ENCODE measurements at regions of chr6 and their contacts with region 1.

Region 1: DNA sequence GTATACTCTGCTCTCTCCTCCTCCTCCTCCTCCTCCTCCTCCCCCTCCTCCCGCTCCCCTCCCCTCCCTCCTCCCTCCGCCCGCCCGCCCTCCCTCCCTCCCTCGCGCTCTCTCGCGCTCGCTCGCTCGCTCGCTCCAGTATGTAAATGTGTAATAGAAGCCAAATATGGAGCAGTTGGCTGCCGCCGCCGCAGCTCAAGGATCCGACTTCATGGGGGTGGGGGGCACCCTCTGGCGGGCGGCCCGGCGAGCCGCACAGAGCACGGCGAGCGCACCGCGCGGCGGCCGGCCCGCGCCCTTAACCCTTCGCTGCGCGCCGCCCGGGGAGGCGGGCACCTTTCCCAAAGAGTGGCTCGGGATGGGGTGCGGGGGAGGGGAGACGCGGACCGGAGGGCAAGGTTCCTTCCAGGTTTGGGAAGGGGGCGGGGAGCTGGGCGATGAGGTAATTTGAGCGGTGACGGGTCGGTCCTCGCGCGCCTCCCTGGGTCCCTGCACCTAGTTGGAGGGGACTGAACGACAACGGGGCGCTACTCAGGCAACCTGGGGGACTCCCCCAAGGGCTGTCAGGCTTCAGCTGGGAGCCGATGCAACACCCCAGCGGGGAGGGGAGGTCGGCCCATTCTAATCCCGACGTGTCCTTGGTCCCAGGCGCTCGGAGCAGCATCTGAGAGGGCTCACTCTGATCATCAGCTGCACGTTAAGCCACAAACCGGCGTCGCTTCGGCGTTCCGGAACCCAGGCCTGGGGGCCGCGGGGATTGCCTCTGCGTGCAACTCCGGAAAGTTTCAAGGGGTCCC is 409 bp upstream of the ATXN1 start:
- DNase-seq: peak; percentile 82 to 91
- ATAC-seq: peak; percentile 47 to 68 (median 59)
- H3K4me3 ChIP-seq: peak overlapping the region; percentile 54
- H3K4me3 Mint-ChIP-seq: peak overlapping the region; percentile 98
- H3K27ac ChIP-seq: peak overlapping the region; percentile 98
- H3K27ac Mint-ChIP-seq: peak overlapping the region; percentile 95 to 98
- H3K4me1 ChIP-seq: peaks cover 15% of the 10 kb centered on the region
- H3K4me1 Mint-ChIP-seq: peaks cover 52 to 65% of the 10 kb centered on the region in 2 donors
- H3K27me3 ChIP-seq: no peaks in the 10 kb centered on the region
- H3K27me3 Mint-ChIP-seq: no peaks in the 10 kb centered on the region
- CTCF ChIP-seq: no peak

Region 2: GRCh38 chr6:16257999-16258708 is 503.5 kb before region 1 on chr6:
- intact Hi-C with region 1: loop called (anchors 10 kb)
- DNase-seq: no peak
- ATAC-seq: no peak
- H3K4me3 ChIP-seq: no peak overlapping the region
- H3K4me3 Mint-ChIP-seq: no peak overlapping the region
- H3K27ac ChIP-seq: no peak overlapping the region
- H3K27ac Mint-ChIP-seq: no peak overlapping the region
- H3K4me1 ChIP-seq: peaks cover 12% of the 10 kb centered on the region
- H3K4me1 Mint-ChIP-seq: peaks cover 6 to 7% of the 10 kb centered on the region in 2 donors
- H3K27me3 ChIP-seq: no peaks in the 10 kb centered on the region
- H3K27me3 Mint-ChIP-seq: peaks cover 4 to 11% of the 10 kb centered on the region in 2 donors
- CTCF ChIP-seq: no peak

Region 3: DNA sequence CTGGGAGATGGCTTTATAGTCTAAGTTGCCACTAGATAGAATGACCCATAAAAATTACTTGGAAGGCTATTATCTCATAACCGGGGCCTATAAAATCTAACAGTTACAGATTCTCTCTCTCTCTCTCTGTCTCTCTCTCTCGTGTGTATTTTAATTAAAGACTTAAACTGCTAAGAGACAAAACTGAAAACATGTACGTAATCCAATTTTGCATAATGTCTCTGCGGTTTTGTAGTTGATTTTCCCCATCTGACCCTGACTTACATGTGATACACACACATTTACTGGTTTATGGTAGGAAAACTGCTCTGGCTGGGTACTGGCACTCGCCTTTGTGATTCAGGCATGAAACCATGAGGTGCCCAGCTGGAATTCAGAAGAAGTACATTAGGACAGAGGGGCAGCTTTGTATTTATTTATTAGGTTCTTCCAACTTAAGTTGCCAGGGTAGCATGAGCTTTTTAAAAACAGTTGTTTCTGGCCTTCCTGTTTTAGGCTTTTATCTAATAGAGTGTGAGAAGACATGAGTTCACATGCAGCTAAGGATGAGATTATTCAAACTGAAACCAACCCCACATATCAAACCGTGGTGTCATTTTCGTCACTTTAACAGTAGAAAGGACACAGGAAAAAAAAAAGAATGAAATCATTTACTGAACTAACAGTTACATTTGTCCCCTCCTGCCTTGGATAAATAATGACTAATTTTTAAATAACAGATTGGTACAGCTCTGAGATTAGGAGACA is 340.8 kb before region 1 on chr6:
- intact Hi-C with region 1: loop called (anchors 5 kb)
- DNase-seq: peak in 1 of 2 donors; percentile 84
- ATAC-seq: peak; percentile 87 to 88 (median 88)
- H3K4me3 ChIP-seq: no peak overlapping the region
- H3K4me3 Mint-ChIP-seq: peak overlapping the region; percentile 77
- H3K27ac ChIP-seq: peak overlapping the region; percentile 84
- H3K27ac Mint-ChIP-seq: peak overlapping the region; percentile 93 to 96
- H3K4me1 ChIP-seq: peaks cover 21% of the 10 kb centered on the region
- H3K4me1 Mint-ChIP-seq: peaks cover 34 to 38% of the 10 kb centered on the region in 2 donors
- H3K27me3 ChIP-seq: no peaks in the 10 kb centered on the region
- H3K27me3 Mint-ChIP-seq: no peaks in the 10 kb centered on the region
- CTCF ChIP-seq: no peak

Region 4: DNA sequence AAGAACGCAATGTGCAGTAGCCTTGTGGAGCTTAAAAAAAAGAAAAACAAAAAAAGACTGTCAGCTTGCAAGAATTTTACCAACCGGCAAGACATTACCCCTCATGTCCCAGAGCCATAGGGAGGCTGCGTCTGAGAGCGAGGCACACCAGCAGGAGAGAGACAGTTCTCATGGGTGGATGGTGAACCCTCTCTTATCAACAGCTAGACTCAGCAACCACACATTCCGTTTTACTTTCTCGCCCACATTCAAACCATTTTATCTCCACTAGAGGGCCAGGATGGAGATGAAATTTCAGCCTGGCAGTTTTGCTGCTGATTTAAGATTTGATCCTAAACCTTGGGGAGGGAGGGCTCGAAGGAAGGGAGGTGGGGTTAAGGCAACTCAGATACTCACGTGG is 247.4 kb before region 1 on chr6:
- intact Hi-C with region 1: loop called (anchors 5 kb)
- DNase-seq: peak in 1 of 2 donors; percentile 69
- ATAC-seq: peak; percentile 62 to 73 (median 68)
- H3K4me3 ChIP-seq: no peak overlapping the region
- H3K4me3 Mint-ChIP-seq: no peak overlapping the region
- H3K27ac ChIP-seq: no peak overlapping the region
- H3K27ac Mint-ChIP-seq: peak overlapping the region in 1 of 2 donors; percentile 62
- H3K4me1 ChIP-seq: peaks cover 24% of the 10 kb centered on the region
- H3K4me1 Mint-ChIP-seq: peaks cover 48 to 67% of the 10 kb centered on the region in 2 donors
- H3K27me3 ChIP-seq: no peaks in the 10 kb centered on the region
- H3K27me3 Mint-ChIP-seq: no peaks in the 10 kb centered on the region
- CTCF ChIP-seq: peak; percentile 50

Region 5: DNA sequence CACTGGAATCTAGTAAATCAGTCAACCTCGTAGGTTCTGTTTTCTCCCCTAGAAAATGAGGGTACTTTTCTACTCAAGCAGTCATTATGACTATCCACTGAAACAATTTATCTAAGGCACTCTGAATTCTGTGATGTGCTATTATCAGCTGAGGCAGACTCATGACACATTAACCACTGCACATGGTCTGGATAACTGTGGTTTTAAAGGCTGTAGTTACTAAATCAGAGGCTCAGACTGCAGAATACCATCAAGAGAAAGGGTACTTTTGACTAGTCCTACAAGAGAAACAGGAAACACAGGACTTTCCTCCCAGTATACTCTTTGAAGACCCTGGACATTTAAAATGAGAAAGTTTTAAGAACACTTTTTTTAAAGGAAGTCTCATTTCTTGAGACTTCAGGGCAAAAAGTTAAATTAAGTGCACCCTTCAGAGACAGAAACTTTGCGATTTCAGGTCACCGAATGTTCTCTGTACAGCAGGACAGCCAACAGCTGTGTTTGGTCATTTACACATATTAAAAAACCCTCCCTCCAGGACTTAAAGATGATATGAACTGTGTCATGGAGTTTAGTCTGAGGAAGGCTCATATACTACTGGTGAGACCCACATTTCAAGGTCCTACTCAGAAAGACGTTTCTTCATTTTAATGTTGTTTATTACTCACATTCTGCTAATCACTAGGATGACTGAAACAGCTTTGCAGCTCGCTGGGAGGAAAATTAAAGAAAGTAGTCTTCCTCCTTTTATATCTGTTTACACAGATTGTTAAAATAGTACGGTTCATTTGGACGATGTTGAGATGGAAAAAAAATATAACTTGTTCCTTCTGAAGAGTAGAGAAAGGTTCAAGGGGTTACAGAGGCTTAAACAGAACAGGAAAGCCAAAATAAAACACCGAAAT is 20.3 kb before region 1 on chr6:
- intact Hi-C with region 1: loop called (anchors 2 kb)
- DNase-seq: peak in 1 of 2 donors; percentile 48
- ATAC-seq: peak; percentile 87 to 96 (median 89)
- H3K4me3 ChIP-seq: no peak overlapping the region
- H3K4me3 Mint-ChIP-seq: peak overlapping the region; percentile 11
- H3K27ac ChIP-seq: no peak overlapping the region
- H3K27ac Mint-ChIP-seq: peak overlapping the region in 1 of 2 donors; percentile 71
- H3K4me1 ChIP-seq: peaks cover 5% of the 10 kb centered on the region
- H3K4me1 Mint-ChIP-seq: peaks cover 55 to 58% of the 10 kb centered on the region in 2 donors
- H3K27me3 ChIP-seq: no peaks in the 10 kb centered on the region
- H3K27me3 Mint-ChIP-seq: no peaks in the 10 kb centered on the region
- CTCF ChIP-seq: no peak

Region 6: DNA sequence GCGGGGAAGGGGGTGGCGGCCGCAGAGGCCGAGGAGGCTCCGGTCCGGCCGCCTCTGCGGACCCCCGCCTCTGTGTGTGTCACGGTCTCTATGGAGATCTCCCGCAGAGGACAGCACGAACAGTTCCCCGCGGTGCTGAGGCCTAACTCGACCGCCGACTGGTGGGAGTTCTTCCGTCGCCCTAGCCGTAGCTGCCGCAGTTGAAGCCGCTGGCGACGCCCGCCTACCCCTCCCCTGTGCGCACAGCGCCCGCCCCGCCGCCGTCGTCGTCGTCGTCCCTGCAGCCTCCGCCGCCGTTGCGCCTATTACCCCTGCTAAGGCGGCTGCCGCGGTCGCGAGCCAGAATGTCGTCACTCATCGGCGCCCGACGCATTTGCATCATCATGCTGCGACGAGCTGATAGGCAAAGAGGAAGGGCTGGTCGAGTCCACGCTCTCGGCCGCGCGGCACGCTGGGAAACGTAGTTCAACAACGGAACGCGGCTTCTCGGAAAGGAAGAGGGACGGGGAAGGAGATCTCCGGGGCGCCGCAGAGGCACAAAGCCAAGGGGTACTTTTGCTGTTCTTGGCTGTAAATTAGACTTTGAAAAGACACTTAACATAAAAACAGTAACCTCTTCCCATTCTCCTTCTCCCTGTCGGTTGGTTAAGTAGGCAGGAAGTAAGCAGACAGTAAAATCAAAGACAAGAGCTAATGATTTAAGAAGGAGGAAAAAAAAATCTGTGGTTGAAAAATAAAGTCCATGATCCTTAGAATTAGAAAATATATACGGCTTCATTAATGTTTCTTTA is 945.1 kb after region 1 on chr6 and contains the start of gene NUP153:
- intact Hi-C with region 1: loop called (anchors 10 kb)
- DNase-seq: peak; percentile 100
- ATAC-seq: peak; percentile 70 to 87 (median 75)
- H3K4me3 ChIP-seq: peak within 1 kb of the TSS; percentile 98
- H3K4me3 Mint-ChIP-seq: peak within 1 kb of the TSS; percentile 89
- H3K27ac ChIP-seq: peak within 1 kb of the TSS; percentile 100
- H3K27ac Mint-ChIP-seq: peak within 1 kb of the TSS; percentile 95 to 98
- H3K4me1 ChIP-seq: peaks cover 35% of the 10 kb centered on the region
- H3K4me1 Mint-ChIP-seq: peaks cover 39 to 40% of the 10 kb centered on the region in 2 donors
- H3K27me3 ChIP-seq: no peaks in the 10 kb centered on the region
- H3K27me3 Mint-ChIP-seq: no peaks in the 10 kb centered on the region
- CTCF ChIP-seq: no peak
- total RNA-seq, gene NUP153: 67.5 to 74.9 (median 68.0) TPM

Measured in natural killer cell (primary cell).